ENCODE measurements at regions of chr12 and their contacts with region 1.

Region 1: GRCh38 chr12:64571411-64571810 is 38.9 kb upstream of the RASSF3 start:
- DNase-seq: no peak
- CTCF ChIP-seq: no peak

Region 2: GRCh38 chr12:64362721-64363300 is 208.6 kb before region 1 on chr12:
- CTCF ChIA-PET with region 1: no interaction called
- POLR2A ChIA-PET with region 1: no interaction called
- DNase-seq: no peak
- CTCF ChIP-seq: no peak

Region 3: DNA sequence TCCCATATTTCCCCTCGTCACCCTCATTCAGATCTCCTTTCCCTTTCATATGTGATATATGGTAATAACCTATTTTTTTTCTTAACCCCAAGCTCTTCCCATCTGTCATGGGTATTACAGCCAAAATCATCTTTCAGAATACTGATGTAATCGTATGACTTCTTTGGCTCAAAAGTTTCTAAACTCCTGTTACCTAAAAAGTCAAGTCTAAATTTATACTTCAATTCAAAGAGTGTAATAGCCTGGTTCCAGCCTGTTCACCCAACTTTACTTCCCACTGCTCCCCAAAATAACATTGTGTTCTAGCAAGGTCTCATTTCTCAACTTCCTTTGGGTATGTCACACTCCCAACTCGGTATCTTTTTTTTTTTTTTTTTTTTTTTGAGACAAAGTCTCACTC is 71.0 kb before region 1 on chr12:
- CTCF ChIA-PET with region 1: no interaction called
- POLR2A ChIA-PET with region 1: no interaction called
- DNase-seq: no peak
- CTCF ChIP-seq: no peak

Region 4: DNA sequence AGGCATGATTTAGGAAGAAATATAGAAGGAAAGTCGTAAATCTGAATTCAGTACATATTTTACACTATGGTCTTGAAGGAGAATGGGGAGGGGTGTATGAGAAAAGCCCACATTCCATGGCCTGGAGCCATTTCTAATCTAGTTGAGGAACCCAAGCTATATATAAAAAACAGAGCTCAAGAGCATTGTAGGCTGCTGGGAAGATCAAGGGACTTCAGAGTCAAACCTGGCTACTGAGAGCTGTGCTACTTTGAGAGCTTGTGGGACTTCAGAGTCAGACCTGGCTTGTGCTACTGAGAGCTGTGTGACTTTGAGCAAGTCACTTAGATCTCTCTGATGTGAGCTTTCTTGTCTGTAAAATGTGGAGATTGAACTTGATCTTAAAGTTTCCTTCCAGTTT is 60.7 kb before region 1 on chr12:
- CTCF ChIA-PET with region 1: no interaction called
- POLR2A ChIA-PET with region 1: no interaction called
- DNase-seq: no peak
- CTCF ChIP-seq: no peak

Region 5: DNA sequence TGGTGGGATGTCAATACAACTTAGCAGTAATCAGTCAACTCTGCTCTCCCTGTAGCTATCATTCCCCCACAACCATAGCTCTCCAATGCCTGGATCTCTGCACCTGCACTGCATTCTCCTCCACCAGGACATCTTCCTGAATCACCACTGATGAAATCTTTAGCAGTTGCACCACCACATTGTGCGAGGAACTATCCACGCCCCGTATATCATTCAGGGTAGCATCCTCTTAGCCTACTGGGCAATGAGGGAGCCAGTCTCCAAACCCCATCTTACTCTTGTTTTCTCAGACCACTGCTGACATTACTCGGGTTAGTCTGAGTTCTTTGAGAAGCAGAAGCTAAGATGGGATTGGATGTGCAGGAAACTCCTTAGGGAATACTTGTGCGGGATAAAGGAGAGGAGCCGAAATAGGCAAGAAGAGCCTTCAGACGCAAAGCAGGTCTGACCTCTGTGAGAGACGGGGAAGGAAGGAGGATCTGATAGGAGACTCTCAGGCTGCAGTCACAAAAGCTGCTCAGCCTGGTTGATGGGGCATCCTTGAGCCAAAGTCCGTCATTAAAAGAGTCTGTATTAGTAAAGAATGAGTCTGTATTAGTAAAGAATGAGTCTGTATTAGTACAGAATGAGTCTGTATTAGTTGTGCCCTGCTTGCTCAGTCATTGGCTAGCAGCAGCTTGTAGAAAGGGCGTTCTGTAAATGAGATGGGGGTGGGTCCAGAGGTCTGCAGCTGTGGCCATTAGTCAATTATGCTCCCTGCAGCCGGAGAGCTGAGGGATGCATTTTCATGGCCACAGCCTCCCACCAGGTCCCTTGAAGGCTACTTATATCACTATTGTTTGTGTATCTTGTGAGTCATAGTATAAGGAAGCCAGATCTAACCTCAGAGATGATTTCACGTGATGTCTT is 10.8 kb before region 1 on chr12:
- CTCF ChIA-PET with region 1: interaction called, 11 read pairs
- POLR2A ChIA-PET with region 1: no interaction called
- DNase-seq: no peak
- CTCF ChIP-seq: no peak